ENCODE measurements at regions of chr2 and their contacts with region 1.

Region 1: GRCh38 chr2:47767880-47768609 is 14.9 kb upstream of the MSH6 start:
- DNase-seq: peak; percentile 80
- H3K4me3 Mint-ChIP-seq: no peak overlapping the region
- H3K27ac Mint-ChIP-seq: no peak overlapping the region
- H3K4me1 Mint-ChIP-seq: peaks cover 2% of the 10 kb centered on the region
- H3K27me3 Mint-ChIP-seq: no peaks in the 10 kb centered on the region

Region 2: GRCh38 chr2:47336259-47337238 is 431.5 kb before region 1 on chr2:
- CTCF ChIA-PET with region 1: interaction called, 44 read pairs
- POLR2A ChIA-PET with region 1: interaction called, 3 read pairs
- intact Hi-C with region 1: loop called (anchors 2 kb)
- DNase-seq: no peak
- H3K4me3 Mint-ChIP-seq: no peak overlapping the region
- H3K27ac Mint-ChIP-seq: no peak overlapping the region
- H3K4me1 Mint-ChIP-seq: no peaks in the 10 kb centered on the region
- H3K27me3 Mint-ChIP-seq: peaks cover 3% of the 10 kb centered on the region

Region 3: GRCh38 chr2:47437287-47437686 is 330.8 kb before region 1 on chr2:
- CTCF ChIA-PET with region 1: interaction called, 22 read pairs
- POLR2A ChIA-PET with region 1: no interaction called
- intact Hi-C with region 1: loop called (anchors 5 kb)
- DNase-seq: no peak
- H3K4me3 Mint-ChIP-seq: no peak overlapping the region
- H3K27ac Mint-ChIP-seq: no peak overlapping the region
- H3K4me1 Mint-ChIP-seq: no peaks in the 10 kb centered on the region
- H3K27me3 Mint-ChIP-seq: no peaks in the 10 kb centered on the region

Region 4: DNA sequence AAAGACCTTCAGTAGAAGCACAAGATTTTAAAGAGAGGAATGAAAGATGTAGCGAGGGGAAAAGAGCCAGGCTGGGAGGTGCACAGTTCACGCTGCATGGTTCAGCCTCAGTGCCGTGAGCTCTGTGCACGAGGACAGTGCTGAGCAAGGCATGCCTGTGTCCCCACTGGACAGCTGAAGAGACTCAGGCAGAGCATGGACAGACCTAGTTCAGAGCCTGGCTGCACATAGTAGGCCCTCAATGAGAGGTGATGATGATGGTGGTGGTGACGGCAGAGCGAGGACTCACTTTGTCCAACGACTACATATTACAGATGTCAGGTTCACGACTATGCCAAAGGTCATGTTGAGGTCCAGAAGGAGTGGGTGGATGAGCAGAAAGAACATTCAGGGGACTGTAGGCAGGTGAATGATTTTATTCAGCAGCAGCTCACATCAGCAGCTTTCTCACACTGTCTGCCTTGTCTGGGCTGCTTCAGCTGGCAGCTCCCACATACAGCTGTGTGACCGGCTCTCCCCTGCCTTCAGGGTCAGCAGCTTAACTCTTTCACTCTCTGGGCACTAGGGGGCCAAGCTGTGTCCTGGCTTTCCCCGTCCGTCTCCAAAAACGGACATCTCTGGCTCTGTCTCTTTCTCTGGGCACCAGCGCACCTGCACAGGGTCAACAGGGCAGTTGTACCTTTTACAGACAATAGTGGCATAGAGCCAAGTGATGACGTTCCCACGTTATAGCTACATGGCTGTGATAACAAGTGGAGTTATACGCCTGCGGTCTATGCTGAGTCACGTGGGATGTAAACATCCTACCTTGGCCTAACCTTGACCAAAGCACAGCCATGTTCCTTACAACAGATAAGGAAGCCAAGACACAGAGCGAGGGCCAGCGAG is 113.9 kb before region 1 on chr2:
- CTCF ChIA-PET with region 1: interaction called, 16 read pairs
- POLR2A ChIA-PET with region 1: no interaction called
- intact Hi-C with region 1: no loop called
- DNase-seq: no peak
- H3K4me3 Mint-ChIP-seq: no peak overlapping the region
- H3K27ac Mint-ChIP-seq: no peak overlapping the region
- H3K4me1 Mint-ChIP-seq: no peaks in the 10 kb centered on the region
- H3K27me3 Mint-ChIP-seq: no peaks in the 10 kb centered on the region

Region 5: GRCh38 chr2:47751875-47752357 is 16.1 kb before region 1 on chr2:
- CTCF ChIA-PET with region 1: interaction called, 21 read pairs
- POLR2A ChIA-PET with region 1: no interaction called
- intact Hi-C with region 1: no loop called
- DNase-seq: no peak
- H3K4me3 Mint-ChIP-seq: no peak overlapping the region
- H3K27ac Mint-ChIP-seq: peak overlapping the region; percentile 87
- H3K4me1 Mint-ChIP-seq: peaks cover 17% of the 10 kb centered on the region
- H3K27me3 Mint-ChIP-seq: no peaks in the 10 kb centered on the region

Measured in activated CD4-positive, alpha-beta memory T cell treated with anti-CD3 and anti-CD28 coated beads for 36 hours (primary cell).